Tibial artery (tissue), 4 donors: ENCODE measurements at regions of chr12 and their contacts with region 1.

Region 1: DNA sequence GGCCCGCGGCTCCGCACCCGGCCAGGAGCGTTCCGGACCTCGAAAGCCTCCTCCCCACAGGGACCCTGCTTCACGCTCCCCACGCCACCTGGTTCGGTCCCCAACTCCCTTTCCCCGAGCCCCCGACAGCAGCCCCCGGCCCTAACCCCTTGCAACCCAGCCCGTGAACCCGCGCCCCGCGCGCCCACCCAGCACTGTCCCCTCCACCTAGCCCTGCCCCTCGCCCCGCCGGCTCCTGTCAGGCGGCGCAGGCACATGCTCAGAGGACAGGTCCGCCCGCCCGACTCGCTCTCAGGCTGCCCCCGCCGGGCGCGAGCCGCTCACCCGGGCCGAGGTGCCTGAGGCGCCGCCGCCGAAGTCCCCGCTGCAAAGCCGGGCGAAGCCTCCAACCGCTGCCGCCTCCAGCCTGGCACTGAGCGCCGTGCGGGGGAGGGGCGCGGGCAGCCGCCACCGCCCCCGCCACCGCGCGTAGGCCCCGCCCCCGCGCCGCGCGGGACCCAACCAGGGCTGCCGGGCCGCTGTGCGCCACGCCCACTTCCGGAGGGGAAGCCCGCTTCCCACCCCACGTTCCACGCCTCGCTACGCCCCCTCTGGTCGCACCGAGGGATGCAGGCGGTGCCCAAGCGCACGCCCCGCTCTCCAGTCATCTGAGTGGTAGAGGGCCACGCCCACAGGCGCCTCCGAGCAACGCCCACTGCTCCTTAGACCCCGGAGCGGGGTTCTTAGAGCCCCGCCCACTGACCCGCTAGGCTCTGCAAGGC is at the start of gene CORO1C:
- DNase-seq: peak; percentile 96 to 99
- H3K4me3 ChIP-seq: peak within 1 kb of the TSS; percentile 87 to 100
- H3K27ac ChIP-seq: peak within 1 kb of the TSS; percentile 96 to 100
- H3K4me1 ChIP-seq: peaks cover 0 to 48% (median 15%) of the 10 kb centered on the region in 4 donors
- H3K27me3 ChIP-seq: no peaks in the 10 kb centered on the region
- CTCF ChIP-seq: peak; percentile 90 to 94

Region 2: GRCh38 chr12:108526482-108527165 is 204.7 kb before region 1 on chr12:
- intact Hi-C with region 1: no loop called
- DNase-seq: no peak
- H3K4me3 ChIP-seq: no peak overlapping the region
- H3K27ac ChIP-seq: no peak overlapping the region
- H3K4me1 ChIP-seq: no peaks in the 10 kb centered on the region
- H3K27me3 ChIP-seq: no peaks in the 10 kb centered on the region
- CTCF ChIP-seq: no peak

Region 3: GRCh38 chr12:108562348-108563135 is 168.7 kb before region 1 on chr12 and contains the start of gene ISCU:
- intact Hi-C with region 1: loop called (anchors 5 kb)
- DNase-seq: peak; percentile 93 to 99
- H3K4me3 ChIP-seq: peak within 1 kb of the TSS; percentile 82 to 93
- H3K27ac ChIP-seq: peak within 1 kb of the TSS; percentile 92 to 94
- H3K4me1 ChIP-seq: peaks cover 0 to 55% (median 41%) of the 10 kb centered on the region in 4 donors
- H3K27me3 ChIP-seq: no peaks in the 10 kb centered on the region
- CTCF ChIP-seq: no peak

Region 4: GRCh38 chr12:108664338-108665258 is 66.7 kb before region 1 on chr12:
- intact Hi-C with region 1: loop called (anchors 5 kb)
- DNase-seq: peak; percentile 93 to 94
- H3K4me3 ChIP-seq: peak overlapping the region in 1 of 2 donors; percentile 20
- H3K27ac ChIP-seq: peak overlapping the region; percentile 73 to 77
- H3K4me1 ChIP-seq: peaks cover 6 to 79% (median 55%) of the 10 kb centered on the region in 4 donors
- H3K27me3 ChIP-seq: no peaks in the 10 kb centered on the region
- CTCF ChIP-seq: peak; percentile 94 to 97

Region 5: GRCh38 chr12:108691175-108691997 is 39.9 kb before region 1 on chr12:
- intact Hi-C with region 1: loop called (anchors 5 kb)
- DNase-seq: peak; percentile 97 to 98
- H3K4me3 ChIP-seq: peak overlapping the region; percentile 17 to 30
- H3K27ac ChIP-seq: peak overlapping the region; percentile 80 to 94
- H3K4me1 ChIP-seq: peaks cover 5 to 95% (median 72%) of the 10 kb centered on the region in 4 donors
- H3K27me3 ChIP-seq: no peaks in the 10 kb centered on the region
- CTCF ChIP-seq: peak; percentile 53 to 66

Region 6: DNA sequence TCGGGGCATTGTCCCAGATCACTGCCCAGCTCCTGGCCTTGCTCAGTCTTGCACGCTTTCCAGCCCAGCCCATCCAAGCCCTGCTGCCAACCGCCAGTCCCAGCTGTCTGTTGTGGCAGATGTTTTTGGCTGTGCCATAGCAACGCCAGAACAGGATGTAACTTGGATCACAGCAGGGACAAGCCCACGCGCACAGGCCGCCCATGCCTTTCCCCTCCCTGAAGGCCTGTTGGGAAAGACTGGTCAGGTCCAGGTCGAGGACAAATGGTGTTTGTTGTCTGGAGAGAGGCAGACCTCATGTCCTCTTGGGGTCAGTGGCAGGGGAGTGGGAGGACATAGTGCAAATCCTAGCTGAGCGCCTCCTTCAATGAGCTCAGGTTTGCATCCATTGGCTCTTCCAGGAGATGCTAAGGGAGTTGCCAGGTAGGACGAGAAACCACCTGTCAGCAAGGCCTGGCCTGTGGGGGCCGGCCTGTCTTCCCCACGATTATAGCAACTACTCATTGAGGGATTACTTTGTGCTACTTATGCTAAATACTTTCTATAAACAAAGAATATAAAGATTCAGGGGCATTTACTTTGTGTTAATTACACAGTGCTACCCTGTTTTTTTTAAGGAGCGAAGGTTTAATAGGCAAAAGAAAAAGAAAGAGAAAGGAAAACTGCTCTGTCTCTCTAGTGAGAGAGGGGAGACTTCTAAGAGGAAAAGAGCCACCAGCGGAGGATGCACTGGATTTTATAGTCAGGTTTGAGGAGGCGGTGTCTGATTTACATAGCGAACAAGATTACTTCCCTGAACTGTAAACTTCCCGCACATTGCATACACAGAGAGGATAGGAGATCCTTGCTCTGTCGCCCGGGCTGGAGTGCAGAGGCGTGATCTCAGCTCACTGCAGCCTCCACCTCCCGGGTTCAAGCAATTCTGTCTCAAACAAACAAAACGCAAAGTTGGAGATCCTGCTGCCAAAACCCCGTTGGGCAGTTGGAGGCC is 42.8 kb after region 1 on chr12:
- intact Hi-C with region 1: loop called (anchors 5 kb)
- DNase-seq: peak; percentile 91 to 97
- H3K4me3 ChIP-seq: no peak overlapping the region
- H3K27ac ChIP-seq: peak overlapping the region; percentile 62 to 77
- H3K4me1 ChIP-seq: peaks cover 6 to 54% (median 39%) of the 10 kb centered on the region in 4 donors
- H3K27me3 ChIP-seq: no peaks in the 10 kb centered on the region
- CTCF ChIP-seq: no peak

Region 7: DNA sequence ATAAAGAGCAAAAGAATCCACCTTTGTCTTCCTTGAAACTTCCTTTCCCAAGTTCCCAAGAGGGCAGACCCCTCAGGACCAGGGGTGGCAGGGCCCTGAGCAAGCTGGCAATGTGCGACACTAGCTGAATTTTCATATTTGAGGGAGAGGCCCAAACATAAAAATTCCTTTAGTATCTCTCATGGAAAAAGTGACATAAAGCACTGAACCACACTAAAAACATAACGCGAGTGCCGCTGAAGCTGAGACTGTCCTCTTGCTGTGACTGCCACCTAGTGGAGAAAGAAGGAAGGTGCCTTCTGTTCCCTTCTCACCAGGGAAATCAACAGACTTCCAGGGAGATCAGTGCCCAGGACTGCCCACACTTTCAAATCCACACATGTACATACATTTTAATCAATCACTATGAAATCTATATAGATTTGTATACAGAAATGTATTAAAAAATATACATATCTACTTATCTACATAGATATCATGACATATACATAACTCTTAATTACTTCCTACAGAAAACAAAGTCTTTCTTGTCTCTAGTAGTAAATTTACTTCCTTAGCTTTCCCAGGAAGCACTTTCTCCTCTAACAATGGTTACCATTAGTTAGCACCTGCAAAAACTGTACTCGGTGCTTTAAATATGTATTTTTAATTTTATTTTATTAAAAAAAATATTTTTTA is 72.3 kb after region 1 on chr12:
- intact Hi-C with region 1: loop called (anchors 2 kb)
- DNase-seq: peak; percentile 90 to 91
- H3K4me3 ChIP-seq: no peak overlapping the region
- H3K27ac ChIP-seq: peak overlapping the region; percentile 80
- H3K4me1 ChIP-seq: peaks cover 0 to 76% (median 34%) of the 10 kb centered on the region in 4 donors
- H3K27me3 ChIP-seq: no peaks in the 10 kb centered on the region
- CTCF ChIP-seq: peak; percentile 95 to 97

Region 8: DNA sequence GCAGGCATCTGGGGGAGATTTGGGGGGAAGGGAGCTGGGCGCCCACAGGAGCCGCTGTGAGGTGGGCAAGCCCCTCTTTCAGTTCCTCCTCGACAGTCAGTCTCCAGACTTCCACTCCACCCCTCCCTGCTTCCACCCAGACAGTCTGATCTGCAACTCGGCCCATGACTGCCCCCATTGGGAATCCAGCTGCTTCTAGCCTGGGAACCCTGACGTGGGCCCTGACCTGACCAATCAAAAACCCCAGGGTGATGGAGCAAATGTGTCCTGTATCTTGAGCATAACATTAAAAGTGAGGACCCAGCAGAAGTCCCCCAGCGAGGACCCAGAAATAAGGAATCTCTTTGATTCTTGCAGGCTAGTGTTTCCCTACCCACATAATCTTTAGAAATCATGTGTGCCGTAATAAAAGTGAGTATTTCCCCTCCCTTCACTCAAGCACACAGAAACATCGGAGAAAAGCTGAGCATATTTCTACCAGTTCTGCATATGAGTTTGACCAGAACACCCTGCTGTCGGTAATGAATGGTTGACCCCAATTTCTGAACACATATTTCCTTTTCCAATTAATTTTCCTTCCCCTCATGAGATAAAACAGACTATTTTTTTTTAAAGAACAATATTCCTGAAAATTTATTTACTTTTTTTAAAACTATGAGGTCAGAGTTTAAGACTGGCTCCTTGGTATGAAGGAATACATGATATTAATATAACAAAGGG is 119.7 kb after region 1 on chr12:
- intact Hi-C with region 1: loop called (anchors 5 kb)
- DNase-seq: peak; percentile 57 to 79
- H3K4me3 ChIP-seq: no peak overlapping the region
- H3K27ac ChIP-seq: peak overlapping the region; percentile 65 to 98
- H3K4me1 ChIP-seq: peaks cover 0 to 82% (median 45%) of the 10 kb centered on the region in 4 donors
- H3K27me3 ChIP-seq: no peaks in the 10 kb centered on the region
- CTCF ChIP-seq: no peak